ENCODE measurements at regions of chrX and their contacts with region 1.

Region 1: DNA sequence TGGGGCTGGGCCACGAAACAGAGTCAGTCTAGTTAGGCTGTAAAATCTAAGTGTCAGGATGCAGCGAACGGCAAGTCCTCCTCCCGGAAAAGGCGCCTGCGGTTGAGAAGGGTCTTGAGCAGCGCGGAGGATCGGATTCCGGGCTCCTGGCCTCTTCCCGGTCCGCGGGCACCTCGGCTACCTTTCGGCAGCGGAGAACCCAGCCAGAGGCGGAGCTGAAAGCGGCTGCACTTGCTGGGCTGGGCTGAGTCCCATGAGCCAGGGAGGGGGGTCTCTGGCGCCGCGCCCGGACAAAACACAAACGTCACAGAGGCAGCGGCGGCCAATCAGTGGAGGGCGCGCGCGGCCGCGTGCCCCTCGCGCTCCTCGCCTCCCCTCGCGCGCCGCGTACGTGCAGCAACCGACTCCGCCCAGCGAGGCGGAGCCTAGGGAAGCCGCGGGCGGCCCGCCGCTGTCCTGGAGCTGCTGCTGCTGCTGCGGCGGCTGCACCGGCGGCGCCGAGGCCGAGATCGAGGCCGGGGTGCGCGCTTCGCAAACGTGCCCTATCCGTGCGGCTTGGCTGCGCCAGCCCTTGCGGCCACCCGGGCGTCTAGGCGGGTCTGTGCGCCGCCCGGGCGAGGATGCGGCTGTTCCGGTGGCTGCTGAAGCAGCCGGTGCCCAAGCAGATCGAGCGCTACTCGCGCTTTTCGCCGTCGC is at the start of gene PDK3:
- DNase-seq: peak; percentile 90
- ATAC-seq: peak; percentile 97
- H3K4me3 Mint-ChIP-seq: peak within 1 kb of the TSS; percentile 82
- H3K27ac Mint-ChIP-seq: peak within 1 kb of the TSS; percentile 91
- H3K4me1 Mint-ChIP-seq: peaks cover 30% of the 10 kb centered on the region
- H3K27me3 Mint-ChIP-seq: no peaks in the 10 kb centered on the region
- CTCF ChIP-seq: no peak
- total RNA-seq, gene PDK3: 46.4 to 50.8 TPM

Region 2: GRCh38 chrX:24479924-24480323 is 14.9 kb after region 1 on chrX:
- CTCF ChIA-PET with region 1: interaction called, 7 read pairs
- POLR2A ChIA-PET with region 1: interaction called, 8 read pairs
- intact Hi-C with region 1: loop called (anchors 2 kb)
- DNase-seq: peak; percentile 86
- ATAC-seq: peak; percentile 96
- H3K4me3 Mint-ChIP-seq: peak overlapping the region; percentile 74
- H3K27ac Mint-ChIP-seq: peak overlapping the region; percentile 96
- H3K4me1 Mint-ChIP-seq: peaks cover 65% of the 10 kb centered on the region
- H3K27me3 Mint-ChIP-seq: no peaks in the 10 kb centered on the region
- CTCF ChIP-seq: no peak

Region 3: DNA sequence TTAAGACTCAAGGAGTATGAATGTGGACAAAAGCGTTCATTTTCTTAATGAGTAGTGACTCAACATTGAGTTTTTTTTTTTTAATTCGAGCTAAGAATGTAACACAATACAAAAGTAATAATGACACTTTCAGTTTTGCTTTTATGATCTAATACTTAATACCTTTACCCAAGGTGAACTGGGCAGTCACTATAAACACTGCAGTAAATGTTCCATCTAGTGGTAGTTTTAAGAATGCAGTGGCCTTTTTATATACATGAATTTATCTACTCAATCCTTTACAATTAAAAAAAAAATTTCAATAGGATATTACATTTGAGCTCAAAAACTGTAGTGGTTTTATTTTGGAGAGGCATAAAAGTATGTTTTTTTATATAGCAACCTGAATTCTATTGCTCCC is 34.0 kb after region 1 on chrX:
- CTCF ChIA-PET with region 1: interaction called, 15 read pairs
- POLR2A ChIA-PET with region 1: no interaction called
- intact Hi-C with region 1: no loop called
- DNase-seq: no peak
- ATAC-seq: peak; percentile 84
- H3K4me3 Mint-ChIP-seq: no peak overlapping the region
- H3K27ac Mint-ChIP-seq: peak overlapping the region; percentile 34
- H3K4me1 Mint-ChIP-seq: peaks cover 25% of the 10 kb centered on the region
- H3K27me3 Mint-ChIP-seq: no peaks in the 10 kb centered on the region
- CTCF ChIP-seq: peak; percentile 54